ENCODE measurements at regions of chr12 and their contacts with region 1.

Region 1: DNA sequence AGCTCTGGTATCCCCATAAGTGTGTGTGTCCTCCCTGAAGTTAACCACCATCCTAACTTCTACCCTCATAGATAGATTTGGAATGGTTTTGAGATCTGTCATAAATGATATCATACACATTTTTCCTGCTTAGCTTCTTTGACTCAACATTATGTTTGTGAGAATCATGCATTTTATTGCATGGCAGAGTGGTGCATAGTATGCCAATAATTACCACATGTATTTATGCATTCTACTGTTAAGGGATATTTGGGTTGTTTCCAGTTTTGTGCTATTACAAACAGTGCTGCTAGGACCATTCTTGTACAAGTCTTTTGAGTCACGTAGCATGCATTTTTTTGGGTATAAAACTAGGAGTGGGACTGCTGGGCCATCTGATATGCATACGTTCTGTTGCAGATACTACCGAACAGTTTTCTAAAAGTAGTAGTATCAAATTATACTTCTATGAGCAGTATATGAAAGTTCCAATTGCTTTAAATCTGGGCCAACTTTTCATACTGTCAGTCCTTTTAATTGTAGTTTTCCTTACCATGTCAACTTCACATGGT is 13.4 kb downstream of the GRIP1 start:
- DNase-seq: no peak
- H3K4me3 ChIP-seq: no peak overlapping the region
- H3K27ac ChIP-seq: no peak overlapping the region
- H3K4me1 ChIP-seq: peaks cover 21% of the 10 kb centered on the region
- CTCF ChIP-seq: no peak

Region 2: DNA sequence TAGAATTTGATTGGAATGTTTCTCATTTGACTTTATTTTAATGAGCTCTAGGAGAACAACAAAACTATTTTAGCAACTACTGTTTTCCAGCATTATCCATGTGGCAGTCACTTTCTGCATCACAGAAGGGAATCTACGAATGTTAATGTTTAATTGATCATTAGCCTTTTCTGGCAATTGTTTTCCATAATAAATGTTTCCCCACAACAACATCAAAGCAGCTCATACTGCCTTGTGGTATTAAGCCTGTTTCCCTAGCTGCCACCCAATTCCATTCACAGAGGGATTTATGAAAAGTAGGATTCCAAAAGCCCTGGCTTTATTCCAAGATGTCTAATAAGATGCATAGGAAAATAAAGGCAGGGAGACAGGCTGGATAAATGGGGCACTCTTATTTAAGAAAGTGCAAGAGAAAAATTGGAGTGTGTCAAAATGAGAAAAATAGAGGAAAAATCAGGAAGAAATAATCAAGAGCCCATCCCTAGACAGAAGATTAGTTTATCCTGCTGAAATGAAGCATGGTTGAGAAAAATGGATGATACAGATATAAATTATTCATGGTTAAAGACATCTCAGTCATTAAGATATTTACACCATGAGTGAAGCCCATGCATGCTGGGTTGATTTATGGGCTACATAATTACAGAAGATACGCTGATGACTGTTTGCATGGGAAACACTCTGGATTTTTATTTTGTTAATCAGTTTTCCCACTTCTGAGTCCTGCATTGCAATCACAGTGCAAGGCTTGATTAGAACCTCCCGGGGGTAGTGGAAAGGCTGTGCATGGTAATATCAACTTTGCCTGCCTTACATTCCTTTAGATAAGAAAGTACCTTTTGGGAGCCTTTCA is 182.9 kb before region 1 on chr12:
- CTCF ChIA-PET with region 1: no interaction called
- POLR2A ChIA-PET with region 1: no interaction called
- intact Hi-C with region 1: no loop called
- DNase-seq: no peak
- H3K4me3 ChIP-seq: no peak overlapping the region
- H3K27ac ChIP-seq: no peak overlapping the region
- H3K4me1 ChIP-seq: peaks cover 12% of the 10 kb centered on the region
- CTCF ChIP-seq: no peak

Region 3: GRCh38 chr12:66647034-66647691 is 18.3 kb before region 1 on chr12:
- CTCF ChIA-PET with region 1: no interaction called
- POLR2A ChIA-PET with region 1: interaction called, 16 read pairs
- intact Hi-C with region 1: no loop called
- DNase-seq: no peak
- H3K4me3 ChIP-seq: no peak overlapping the region
- H3K27ac ChIP-seq: no peak overlapping the region
- H3K4me1 ChIP-seq: no peaks in the 10 kb centered on the region
- CTCF ChIP-seq: no peak

Region 4: DNA sequence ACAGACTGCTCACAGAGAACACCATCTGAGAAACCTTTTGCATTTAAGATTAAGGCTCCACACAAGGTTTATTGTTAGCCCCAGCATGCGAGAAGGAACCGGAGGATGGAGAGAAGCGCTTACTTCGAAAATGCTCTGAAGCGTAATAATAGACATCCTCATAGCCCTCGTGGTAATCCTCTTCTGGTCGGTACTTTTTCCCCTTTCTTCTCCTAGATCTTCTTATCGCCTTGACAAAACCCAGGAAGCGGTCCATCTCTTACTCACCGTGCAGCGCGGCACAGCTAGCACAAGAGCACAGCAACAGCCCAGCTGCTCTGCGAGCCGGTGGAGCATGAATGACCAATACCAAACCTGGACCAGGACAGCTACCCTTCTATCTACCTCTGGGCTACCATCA is 138.4 kb after region 1 on chr12:
- CTCF ChIA-PET with region 1: no interaction called
- POLR2A ChIA-PET with region 1: no interaction called
- intact Hi-C with region 1: no loop called
- DNase-seq: no peak
- H3K4me3 ChIP-seq: no peak overlapping the region
- H3K27ac ChIP-seq: no peak overlapping the region
- H3K4me1 ChIP-seq: no peaks in the 10 kb centered on the region
- CTCF ChIP-seq: no peak